ENCODE measurements at regions of chr15 and their contacts with region 1.

Region 1: DNA sequence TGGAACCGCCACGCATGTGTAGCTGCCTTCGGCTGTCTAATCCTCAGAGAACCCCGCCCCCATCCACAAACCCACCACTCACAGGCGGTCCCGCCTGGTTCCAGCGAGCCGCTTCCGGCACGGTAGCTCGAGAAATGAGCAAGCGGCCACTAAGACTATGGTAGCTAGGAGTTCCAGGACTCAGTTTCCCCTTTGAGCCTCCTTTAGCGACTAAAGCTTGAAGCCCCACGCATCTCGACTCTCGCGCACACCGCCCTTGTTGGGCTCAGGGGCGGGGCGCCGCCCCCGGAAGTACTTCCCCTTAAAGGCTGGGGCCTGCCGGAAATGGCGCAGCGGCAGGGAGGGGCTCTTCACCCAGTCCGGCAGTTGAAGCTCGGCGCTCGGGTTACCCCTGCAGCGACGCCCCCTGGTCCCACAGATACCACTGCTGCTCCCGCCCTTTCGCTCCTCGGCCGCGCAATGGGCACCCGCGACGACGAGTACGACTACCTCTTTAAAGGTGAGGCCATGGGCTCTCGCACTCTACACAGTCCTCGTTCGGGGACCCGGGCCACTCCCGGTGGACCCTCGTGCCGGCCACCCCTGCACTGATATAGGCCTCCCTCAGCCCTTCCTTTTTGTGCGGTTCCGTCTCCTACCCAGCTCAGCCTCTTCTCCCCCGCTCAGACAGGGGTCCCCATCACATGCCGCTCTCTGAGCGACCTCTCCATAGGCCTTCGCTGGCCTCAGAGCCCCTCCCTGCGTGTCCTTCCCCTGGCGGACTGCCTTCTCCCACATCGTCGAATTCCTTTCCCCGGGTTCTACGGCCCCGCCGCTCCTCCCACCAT is at the start of gene RAB11A:
- DNase-seq: peak; percentile 96
- CTCF ChIP-seq: peak; percentile 47

Region 2: DNA sequence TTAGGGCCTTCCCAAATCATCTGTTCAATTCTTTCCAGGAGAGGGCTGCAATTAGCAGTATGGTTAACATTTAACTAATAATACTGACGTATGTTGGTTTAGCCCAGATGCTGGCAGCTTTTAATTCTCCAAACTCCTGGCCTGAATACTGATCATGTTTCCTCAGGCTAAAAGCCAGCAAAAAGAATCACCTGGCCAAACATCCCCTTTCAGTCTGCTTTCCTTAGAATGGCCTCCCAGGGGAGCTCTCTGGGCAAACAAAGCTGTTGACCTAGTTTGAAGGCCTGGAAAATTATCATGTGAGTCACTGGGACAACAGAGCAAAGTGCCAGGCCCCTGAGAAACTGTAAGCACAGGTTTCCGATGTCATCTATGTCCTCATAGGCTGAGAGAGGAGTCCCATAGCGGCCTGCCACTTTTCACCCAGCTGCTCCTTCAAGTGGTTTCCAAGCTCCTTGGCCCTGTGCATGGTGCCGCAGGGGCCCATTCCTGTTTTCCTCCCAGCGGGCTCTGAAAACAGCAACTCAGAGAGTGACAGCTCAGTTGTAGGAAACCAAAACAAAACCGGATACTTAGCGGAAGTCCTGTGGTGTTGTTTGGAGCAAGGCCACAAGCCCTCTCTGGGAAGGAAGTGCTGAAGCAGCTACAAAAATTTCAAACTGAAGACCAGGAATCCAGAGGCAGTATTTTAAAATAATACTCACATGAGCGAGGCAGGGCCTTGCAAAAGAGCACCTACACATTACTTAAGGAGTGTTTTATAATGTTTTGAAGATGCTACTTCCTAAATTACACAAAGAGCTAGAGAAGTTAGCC is 36.6 kb before region 1 on chr15:
- CTCF ChIA-PET with region 1: interaction called, 35 read pairs
- POLR2A ChIA-PET with region 1: no interaction called
- DNase-seq: peak; percentile 32
- CTCF ChIP-seq: no peak

Region 3: GRCh38 chr15:65856821-65857455 is 12.4 kb before region 1 on chr15:
- CTCF ChIA-PET with region 1: interaction called, 51 read pairs
- POLR2A ChIA-PET with region 1: interaction called, 4 read pairs
- DNase-seq: peak; percentile 52
- CTCF ChIP-seq: peak; percentile 74

Region 4: DNA sequence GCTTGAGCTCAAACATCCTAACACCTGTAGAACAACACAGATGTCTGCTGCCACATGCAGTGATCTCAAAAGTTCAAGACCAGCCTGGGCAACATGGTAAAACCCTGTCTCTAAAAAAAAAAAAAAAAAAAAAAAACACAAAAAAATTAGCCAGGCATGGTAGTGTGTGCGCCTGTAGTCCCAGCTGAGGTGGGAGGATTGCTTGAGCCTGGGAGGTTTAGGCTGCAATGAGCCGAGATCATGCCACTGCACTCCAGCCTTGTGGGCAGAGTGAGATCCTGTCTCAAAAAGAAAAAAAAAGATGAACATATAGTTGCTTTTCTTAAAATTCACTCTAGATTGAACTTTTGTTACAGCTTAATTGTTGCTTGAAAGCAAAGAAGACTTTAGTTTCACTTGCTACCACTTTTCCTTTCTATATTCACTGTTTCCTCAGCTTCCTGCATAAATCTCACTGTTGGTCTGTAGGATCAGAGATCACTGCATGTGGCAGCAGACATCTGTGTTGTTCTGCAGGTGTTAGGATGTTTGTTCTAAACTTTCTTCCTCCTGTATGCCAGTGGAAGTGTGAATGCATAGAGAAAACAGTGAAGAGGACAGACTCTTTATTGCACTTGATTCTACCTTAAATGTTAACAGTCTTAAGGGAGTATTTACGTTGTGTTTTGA is 12.6 kb after region 1 on chr15:
- CTCF ChIA-PET with region 1: interaction called, 14 read pairs
- POLR2A ChIA-PET with region 1: no interaction called
- DNase-seq: no peak
- CTCF ChIP-seq: no peak

Region 5: DNA sequence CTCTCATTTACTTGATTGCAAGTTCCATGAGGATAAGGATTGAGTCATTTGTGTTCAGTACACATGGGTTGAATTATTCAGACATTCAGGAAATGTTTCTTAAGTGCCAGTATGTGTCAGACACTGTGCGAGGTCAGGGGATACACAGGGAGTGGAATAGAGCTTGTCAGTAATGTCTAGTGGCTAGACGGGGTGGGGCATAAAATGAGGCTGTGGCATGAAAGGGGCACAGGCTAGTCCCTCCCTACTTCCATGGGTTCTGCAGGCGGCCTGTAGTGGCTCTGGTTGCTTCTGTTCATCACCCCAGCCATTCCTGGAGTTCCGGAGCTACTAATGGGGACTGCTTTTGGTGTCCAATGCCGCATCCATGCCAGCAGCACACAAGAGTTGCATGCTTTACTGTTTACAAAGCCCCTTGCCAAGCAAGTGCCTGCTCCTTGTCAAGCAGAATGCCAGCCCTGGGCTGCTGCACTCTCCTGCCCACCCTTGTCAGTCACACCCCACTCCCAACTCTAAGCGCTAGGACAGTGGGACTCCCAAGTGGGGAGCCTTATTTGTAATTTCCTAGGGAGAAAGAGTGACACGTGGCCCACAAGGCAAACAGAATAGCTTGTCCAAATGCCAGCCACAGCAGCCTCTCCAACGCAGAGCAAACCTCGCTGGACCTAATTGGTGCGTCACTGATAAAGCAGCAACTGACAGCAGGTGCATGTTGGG is 70.7 kb after region 1 on chr15:
- CTCF ChIA-PET with region 1: no interaction called
- POLR2A ChIA-PET with region 1: no interaction called
- DNase-seq: no peak
- CTCF ChIP-seq: no peak

Region 6: DNA sequence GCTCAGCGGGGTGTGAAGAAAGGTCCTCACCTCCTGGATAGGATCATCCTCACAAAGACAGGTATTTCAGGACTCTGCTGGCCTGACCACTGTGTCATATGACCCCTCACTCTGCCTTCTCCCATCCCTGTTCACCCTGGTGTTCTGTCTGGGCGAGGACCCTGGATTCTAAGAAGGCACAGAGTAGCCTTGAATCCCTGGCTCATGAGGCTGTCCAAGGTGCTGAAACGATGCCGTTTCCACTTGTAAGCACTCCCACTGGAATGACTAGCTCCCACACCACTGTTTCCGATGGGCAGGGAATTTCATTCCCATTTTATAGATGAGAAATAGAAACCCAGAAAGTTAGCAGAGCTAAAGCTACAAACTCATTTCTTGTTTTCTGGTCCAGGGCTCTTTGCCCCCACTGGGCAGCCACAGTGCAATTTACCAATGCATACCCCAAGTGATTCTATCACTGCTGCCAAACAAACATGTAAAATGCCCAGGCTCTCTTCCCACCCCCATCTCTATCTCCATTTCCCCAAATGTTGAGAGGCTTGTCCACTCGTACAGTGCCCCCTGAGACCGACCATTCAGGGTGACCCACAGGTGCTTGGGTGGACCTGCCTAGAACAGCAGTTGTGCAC is 83.2 kb after region 1 on chr15:
- CTCF ChIA-PET with region 1: no interaction called
- POLR2A ChIA-PET with region 1: no interaction called
- DNase-seq: no peak
- CTCF ChIP-seq: no peak

Measured in GM10248 (cell line).